ENCODE measurements at regions of chr11 and their contacts with region 1.

Region 1: GRCh38 chr11:72831513-72832300 is 17.5 kb downstream of the ATG16L2 start:
- DNase-seq: peak; percentile 82
- H3K4me3 Mint-ChIP-seq: no peak overlapping the region
- H3K27ac Mint-ChIP-seq: no peak overlapping the region
- H3K4me1 Mint-ChIP-seq: peaks cover 9% of the 10 kb centered on the region
- H3K27me3 Mint-ChIP-seq: no peaks in the 10 kb centered on the region
- CTCF ChIP-seq: peak; percentile 93

Region 2: GRCh38 chr11:72722050-72722748 is 109.5 kb before region 1 on chr11:
- CTCF ChIA-PET with region 1: interaction called, 14 read pairs
- POLR2A ChIA-PET with region 1: interaction called, 3 read pairs
- intact Hi-C with region 1: loop called (anchors 5 kb)
- DNase-seq: peak; percentile 90
- H3K4me3 Mint-ChIP-seq: peak overlapping the region; percentile 81
- H3K27ac Mint-ChIP-seq: peak overlapping the region; percentile 89
- H3K4me1 Mint-ChIP-seq: peaks cover 21% of the 10 kb centered on the region
- H3K27me3 Mint-ChIP-seq: no peaks in the 10 kb centered on the region
- CTCF ChIP-seq: no peak

Region 3: GRCh38 chr11:72924568-72925190 is 93.0 kb after region 1 on chr11:
- CTCF ChIA-PET with region 1: interaction called, 13 read pairs
- POLR2A ChIA-PET with region 1: no interaction called
- intact Hi-C with region 1: loop called (anchors 1 kb)
- DNase-seq: peak; percentile 44
- H3K4me3 Mint-ChIP-seq: no peak overlapping the region
- H3K27ac Mint-ChIP-seq: no peak overlapping the region
- H3K4me1 Mint-ChIP-seq: no peaks in the 10 kb centered on the region
- H3K27me3 Mint-ChIP-seq: no peaks in the 10 kb centered on the region
- CTCF ChIP-seq: peak; percentile 55

Region 4: GRCh38 chr11:73236854-73237253 is 405.1 kb after region 1 on chr11:
- CTCF ChIA-PET with region 1: interaction called, 12 read pairs
- POLR2A ChIA-PET with region 1: no interaction called
- intact Hi-C with region 1: loop called (anchors 1 kb)
- DNase-seq: peak; percentile 75
- H3K4me3 Mint-ChIP-seq: no peak overlapping the region
- H3K27ac Mint-ChIP-seq: no peak overlapping the region
- H3K4me1 Mint-ChIP-seq: no peaks in the 10 kb centered on the region
- H3K27me3 Mint-ChIP-seq: no peaks in the 10 kb centered on the region
- CTCF ChIP-seq: peak; percentile 62

Region 5: GRCh38 chr11:73288873-73289707 is 457.4 kb after region 1 on chr11:
- CTCF ChIA-PET with region 1: interaction called, 17 read pairs
- POLR2A ChIA-PET with region 1: no interaction called
- intact Hi-C with region 1: loop called (anchors 1 kb)
- DNase-seq: peak; percentile 72
- H3K4me3 Mint-ChIP-seq: no peak overlapping the region
- H3K27ac Mint-ChIP-seq: no peak overlapping the region
- H3K4me1 Mint-ChIP-seq: peaks cover 6% of the 10 kb centered on the region
- H3K27me3 Mint-ChIP-seq: no peaks in the 10 kb centered on the region
- CTCF ChIP-seq: peak; percentile 97

Measured in MCF 10A (cell line).